SK-N-SH (cell line): ENCODE measurements at regions of chr20 and their contacts with region 1.

Region 1: DNA sequence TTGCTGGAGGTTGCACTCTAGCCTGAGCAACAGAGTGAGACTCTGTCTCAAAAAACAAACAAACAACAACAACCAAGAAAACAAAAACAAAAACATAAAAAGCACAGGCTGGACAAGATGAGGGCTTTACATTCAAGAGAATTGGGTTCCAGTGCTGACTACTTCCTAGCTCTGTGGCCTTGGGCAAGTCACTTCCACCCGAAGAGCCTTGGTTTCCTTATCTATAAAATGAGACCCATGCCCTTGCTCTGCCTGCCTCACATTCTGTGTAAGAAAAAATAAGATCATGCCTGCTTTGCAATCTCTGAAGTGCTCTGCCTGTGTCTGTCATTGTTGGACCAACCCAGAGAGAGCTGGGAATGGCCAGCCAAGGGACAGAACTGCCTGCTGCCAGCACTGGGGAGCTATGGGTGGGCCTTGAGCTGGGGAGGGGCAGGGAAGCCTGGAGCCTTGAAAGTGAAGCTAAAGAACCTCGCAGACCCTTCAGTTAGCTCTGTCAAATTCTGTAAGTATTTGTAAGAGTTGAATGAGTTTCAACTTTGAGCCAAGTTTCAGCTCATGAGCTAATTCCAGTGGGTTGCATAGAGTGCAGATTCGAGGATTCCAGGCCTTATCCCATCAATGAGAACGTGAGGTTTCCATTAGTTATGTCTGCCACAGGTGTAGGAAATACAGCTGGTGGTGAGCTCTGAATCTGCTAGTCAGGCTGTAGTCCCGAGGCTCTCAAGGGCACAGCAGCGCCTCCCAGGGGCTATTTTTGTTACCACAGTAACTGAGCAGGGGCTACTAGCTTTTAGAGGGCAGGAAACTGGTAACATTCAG is 93.2 kb downstream of the DLGAP4 start:
- DNase-seq: peak; percentile 81
- H3K4me3 ChIP-seq: no peak overlapping the region; a peak in 1 of 4 replicates
- H3K27ac ChIP-seq: no peak overlapping the region
- H3K4me1 ChIP-seq: peaks cover 0 to 12% of the 10 kb centered on the region in 2 experiments; a peak in 1 of 4 replicates
- H3K27me3 ChIP-seq: peaks cover 20% of the 10 kb centered on the region; the same call in 1 of the 2 replicates
- CTCF ChIP-seq: peak; percentile 51
- EP300 ChIP-seq: no peak
- RAD21 ChIP-seq: peak; percentile 72

Region 2: GRCh38 chr20:36214684-36215256 is 184.6 kb before region 1 on chr20:
- CTCF ChIA-PET with region 1: interaction called, 10 read pairs
- POLR2A ChIA-PET with region 1: no interaction called
- DNase-seq: peak; percentile 71
- H3K4me3 ChIP-seq: no peak overlapping the region; a peak in 1 of 4 replicates
- H3K27ac ChIP-seq: no peak overlapping the region
- H3K4me1 ChIP-seq: no peaks in the 10 kb centered on the region
- H3K27me3 ChIP-seq: no peaks in the 10 kb centered on the region
- CTCF ChIP-seq: peak; percentile 62
- EP300 ChIP-seq: no peak
- RAD21 ChIP-seq: peak; percentile 76

Region 3: DNA sequence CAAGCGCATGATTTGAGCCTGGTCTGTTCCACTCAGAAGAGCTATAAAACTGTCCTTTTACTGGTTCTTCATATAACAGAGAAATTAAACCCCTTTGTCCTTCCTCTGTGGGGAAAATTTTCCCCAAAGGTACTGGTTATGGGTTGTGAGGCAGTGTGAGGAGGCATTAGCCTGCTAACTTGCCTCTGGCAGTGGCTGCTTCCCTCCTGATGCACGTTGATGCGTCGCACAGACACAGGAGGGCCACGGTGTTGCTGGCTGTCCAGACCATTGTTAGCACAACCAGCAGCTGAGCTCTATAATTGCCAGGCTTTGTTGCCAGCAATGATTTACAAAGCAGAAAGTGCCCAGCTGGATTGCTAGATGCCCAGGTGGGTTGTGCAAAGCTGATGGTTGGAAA is 153.0 kb before region 1 on chr20:
- CTCF ChIA-PET with region 1: interaction called, 10 read pairs
- POLR2A ChIA-PET with region 1: no interaction called
- DNase-seq: no peak
- H3K4me3 ChIP-seq: no peak overlapping the region
- H3K27ac ChIP-seq: peak overlapping the region in 1 of 2 experiments; percentile 74; a peak in 2 of 4 replicates
- H3K4me1 ChIP-seq: peaks cover 0 to 5% of the 10 kb centered on the region in 2 experiments; a peak in 1 of 4 replicates
- H3K27me3 ChIP-seq: no peaks in the 10 kb centered on the region
- CTCF ChIP-seq: no peak
- EP300 ChIP-seq: no peak
- RAD21 ChIP-seq: no peak

Region 4: GRCh38 chr20:36273414-36274180 is 125.8 kb before region 1 on chr20:
- CTCF ChIA-PET with region 1: interaction called, 14 read pairs
- POLR2A ChIA-PET with region 1: no interaction called
- DNase-seq: peak; percentile 51
- H3K4me3 ChIP-seq: no peak overlapping the region
- H3K27ac ChIP-seq: no peak overlapping the region
- H3K4me1 ChIP-seq: peaks cover 0 to 15% of the 10 kb centered on the region in 2 experiments; a peak in 1 of 4 replicates
- H3K27me3 ChIP-seq: no peaks in the 10 kb centered on the region; the same call in 1 of the 2 replicates
- CTCF ChIP-seq: peak; percentile 43
- EP300 ChIP-seq: no peak
- RAD21 ChIP-seq: peak; percentile 61

Region 5: DNA sequence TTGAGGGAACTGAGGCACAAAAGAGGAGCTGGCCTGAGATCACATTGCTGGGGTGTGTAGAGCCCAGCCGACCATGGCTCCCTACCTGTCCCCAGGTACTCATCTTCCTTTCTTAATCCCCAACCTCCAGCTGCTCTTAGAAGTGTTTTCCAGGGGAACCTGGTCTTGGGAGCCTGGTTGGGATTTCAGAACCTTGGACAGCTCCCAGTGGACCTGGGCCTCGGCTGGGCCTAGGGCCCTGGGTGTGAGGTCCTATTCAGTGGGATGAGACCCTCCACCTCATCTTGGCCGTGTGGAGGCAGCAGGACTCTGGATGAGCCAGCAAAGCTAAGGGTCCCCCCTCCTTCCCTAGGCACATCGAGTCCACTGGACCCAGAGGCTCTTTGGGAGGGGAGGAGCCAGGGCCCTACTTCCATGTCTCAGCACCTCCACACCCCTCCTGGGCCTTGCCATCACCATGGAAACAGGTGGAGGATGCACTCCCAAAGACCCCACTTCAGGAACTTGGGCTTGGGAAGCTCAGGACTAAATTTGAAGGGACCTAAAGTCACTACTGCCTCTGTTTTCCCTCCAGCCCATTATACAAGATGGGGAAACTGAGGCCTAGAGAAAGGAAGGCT is 54.7 kb before region 1 on chr20:
- CTCF ChIA-PET with region 1: interaction called, 11 read pairs
- POLR2A ChIA-PET with region 1: no interaction called
- DNase-seq: no peak
- H3K4me3 ChIP-seq: no peak overlapping the region
- H3K27ac ChIP-seq: no peak overlapping the region
- H3K4me1 ChIP-seq: no peaks in the 10 kb centered on the region; a peak in 1 of 4 replicates
- H3K27me3 ChIP-seq: no peaks in the 10 kb centered on the region
- CTCF ChIP-seq: no peak
- EP300 ChIP-seq: no peak
- RAD21 ChIP-seq: no peak

Region 6: GRCh38 chr20:36481381-36482043 is 82.2 kb after region 1 on chr20:
- CTCF ChIA-PET with region 1: no interaction called
- POLR2A ChIA-PET with region 1: no interaction called
- DNase-seq: no peak
- H3K4me3 ChIP-seq: no peak overlapping the region
- H3K27ac ChIP-seq: peak overlapping the region in 1 of 2 experiments; percentile 39; a peak in 1 of 4 replicates
- H3K4me1 ChIP-seq: peaks cover 26 to 63% of the 10 kb centered on the region in 2 experiments; a peak in 3 of 4 replicates
- H3K27me3 ChIP-seq: no peaks in the 10 kb centered on the region
- CTCF ChIP-seq: no peak; the same call in 1 of the 2 replicates
- EP300 ChIP-seq: no peak
- RAD21 ChIP-seq: no peak

Region 7: DNA sequence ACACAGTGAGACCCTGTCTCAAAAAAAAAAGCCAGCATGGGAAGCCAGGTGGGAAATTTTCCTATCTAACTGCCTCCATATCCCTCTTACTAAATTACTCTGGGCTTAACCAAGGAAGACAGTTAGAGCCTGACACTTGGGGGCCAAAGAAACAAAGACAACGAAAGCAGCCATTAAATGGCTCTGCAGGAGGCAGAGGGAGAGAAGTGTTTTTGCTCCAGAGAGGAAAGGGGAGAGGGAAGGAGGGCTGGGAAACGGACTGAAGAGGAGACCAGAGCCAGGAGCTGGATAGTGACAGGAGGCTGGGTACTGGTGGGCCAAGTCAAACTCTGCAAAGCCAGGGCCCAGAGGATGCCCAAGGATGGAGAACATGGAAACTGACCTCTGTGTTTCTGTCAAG is 163.4 kb after region 1 on chr20:
- CTCF ChIA-PET with region 1: no interaction called
- POLR2A ChIA-PET with region 1: no interaction called
- DNase-seq: no peak
- H3K4me3 ChIP-seq: no peak overlapping the region
- H3K27ac ChIP-seq: no peak overlapping the region
- H3K4me1 ChIP-seq: no peaks in the 10 kb centered on the region
- H3K27me3 ChIP-seq: no peaks in the 10 kb centered on the region
- CTCF ChIP-seq: no peak
- EP300 ChIP-seq: no peak
- RAD21 ChIP-seq: no peak